ENCODE measurements at regions of chr5 and their contacts with region 1.

Region 1: GRCh38 chr5:16690243-16690852 is 73.6 kb upstream of the RETREG1 start:
- DNase-seq: no peak
- H3K4me3 ChIP-seq: no peak overlapping the region
- H3K27ac ChIP-seq: no peak overlapping the region
- H3K27me3 ChIP-seq: no peaks in the 10 kb centered on the region
- CTCF ChIP-seq: peak; percentile 84

Region 2: GRCh38 chr5:16666883-16667398 is 23.4 kb before region 1 on chr5:
- CTCF ChIA-PET with region 1: interaction called, 10 read pairs
- POLR2A ChIA-PET with region 1: no interaction called
- DNase-seq: no peak
- H3K4me3 ChIP-seq: no peak overlapping the region
- H3K27ac ChIP-seq: no peak overlapping the region
- H3K27me3 ChIP-seq: no peaks in the 10 kb centered on the region
- CTCF ChIP-seq: peak; percentile 33; the same call in 1 of the 2 replicates

Region 3: GRCh38 chr5:17012302-17012701 is 322.0 kb after region 1 on chr5:
- CTCF ChIA-PET with region 1: no interaction called
- POLR2A ChIA-PET with region 1: no interaction called
- DNase-seq: no peak
- H3K4me3 ChIP-seq: no peak overlapping the region
- H3K27ac ChIP-seq: peak overlapping the region; percentile 52
- H3K27me3 ChIP-seq: no peaks in the 10 kb centered on the region
- CTCF ChIP-seq: no peak